Activated CD4-positive, alpha-beta T cell treated with anti-CD3 and anti-CD28 coated beads, Interleukin-2, amount 10 ng/mL, durations not matched to agents 24 days and 14 days (primary cell): ENCODE measurements at regions of chr20 and their contacts with region 1.

Region 1: DNA sequence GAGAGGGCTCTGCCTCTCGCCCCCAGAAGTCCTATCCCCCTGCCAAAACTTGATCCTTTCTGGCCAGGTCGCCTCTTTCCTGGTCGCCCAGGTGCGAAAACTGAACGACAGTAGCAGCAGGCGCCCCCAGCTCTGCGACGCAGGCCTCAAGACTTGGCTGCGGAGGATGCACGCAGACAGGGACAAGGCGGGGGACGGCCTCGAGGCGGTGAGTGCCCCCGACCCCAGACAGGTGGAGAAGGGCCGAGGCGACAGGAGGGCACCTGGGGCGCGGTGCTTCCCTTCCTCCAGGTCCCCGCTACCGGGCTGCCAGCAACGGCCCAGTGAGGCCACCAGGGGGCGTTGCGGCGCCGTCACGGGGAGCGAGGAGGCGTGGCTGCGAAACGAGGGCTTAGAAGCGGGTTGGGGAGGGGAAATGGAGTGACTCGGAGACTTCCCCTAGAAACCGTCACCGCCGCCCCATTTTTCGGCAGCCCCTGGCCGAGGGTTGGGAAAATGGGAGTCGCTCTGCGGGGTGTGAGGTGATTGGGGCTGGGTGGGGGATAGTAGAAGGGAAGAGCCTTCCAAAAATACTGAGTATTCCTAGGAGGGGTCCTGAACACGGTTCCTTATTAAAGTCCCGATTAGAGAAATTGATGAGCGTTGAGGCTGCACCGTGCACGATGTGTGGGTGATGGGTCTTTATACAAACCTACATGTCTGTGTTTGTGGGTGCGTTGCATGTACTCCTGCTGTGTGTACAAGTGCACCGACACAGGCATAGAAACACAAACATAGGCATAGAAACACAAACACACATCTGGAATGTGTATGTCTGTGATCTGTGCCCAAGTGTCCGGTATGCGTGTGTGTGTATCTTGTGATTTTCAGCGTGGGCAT is 44.6 kb downstream of the ARHGAP40 start:
- DNase-seq: peak; percentile 98
- H3K4me3 Mint-ChIP-seq: peak overlapping the region; percentile 86
- H3K27ac Mint-ChIP-seq: no peak overlapping the region
- H3K4me1 Mint-ChIP-seq: peaks cover 7% of the 10 kb centered on the region
- H3K27me3 Mint-ChIP-seq: peaks cover 58% of the 10 kb centered on the region

Region 2: DNA sequence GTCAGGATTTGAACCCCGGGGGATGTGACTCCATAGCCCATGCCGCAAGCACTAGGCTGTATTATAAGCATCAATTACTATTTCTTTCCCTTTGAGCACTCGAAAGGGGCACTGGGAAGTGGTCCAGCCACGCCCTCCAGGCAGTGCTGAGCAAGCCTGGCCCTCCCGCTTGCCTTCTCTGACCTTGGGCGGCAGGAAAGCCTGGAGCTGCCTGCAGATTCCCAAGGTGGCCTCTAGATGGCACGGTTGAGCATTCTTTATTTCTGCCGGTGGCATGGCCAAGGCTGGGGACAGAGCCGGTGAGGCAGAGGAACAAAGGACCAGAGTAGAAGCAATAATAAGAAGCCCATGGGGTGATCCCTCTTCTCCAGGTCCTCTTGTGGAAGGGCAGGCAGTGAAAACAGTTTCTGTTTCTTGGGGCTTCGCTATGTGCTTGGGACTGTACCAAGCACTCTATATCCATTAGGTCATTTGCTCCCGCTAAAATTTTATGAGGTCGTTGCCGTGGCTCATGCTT is 12.6 kb before region 1 on chr20:
- intact Hi-C with region 1: no loop called
- DNase-seq: peak; percentile 88
- H3K4me3 Mint-ChIP-seq: no peak overlapping the region
- H3K27ac Mint-ChIP-seq: no peak overlapping the region
- H3K4me1 Mint-ChIP-seq: peaks cover 8% of the 10 kb centered on the region
- H3K27me3 Mint-ChIP-seq: peaks cover 11% of the 10 kb centered on the region

Region 3: DNA sequence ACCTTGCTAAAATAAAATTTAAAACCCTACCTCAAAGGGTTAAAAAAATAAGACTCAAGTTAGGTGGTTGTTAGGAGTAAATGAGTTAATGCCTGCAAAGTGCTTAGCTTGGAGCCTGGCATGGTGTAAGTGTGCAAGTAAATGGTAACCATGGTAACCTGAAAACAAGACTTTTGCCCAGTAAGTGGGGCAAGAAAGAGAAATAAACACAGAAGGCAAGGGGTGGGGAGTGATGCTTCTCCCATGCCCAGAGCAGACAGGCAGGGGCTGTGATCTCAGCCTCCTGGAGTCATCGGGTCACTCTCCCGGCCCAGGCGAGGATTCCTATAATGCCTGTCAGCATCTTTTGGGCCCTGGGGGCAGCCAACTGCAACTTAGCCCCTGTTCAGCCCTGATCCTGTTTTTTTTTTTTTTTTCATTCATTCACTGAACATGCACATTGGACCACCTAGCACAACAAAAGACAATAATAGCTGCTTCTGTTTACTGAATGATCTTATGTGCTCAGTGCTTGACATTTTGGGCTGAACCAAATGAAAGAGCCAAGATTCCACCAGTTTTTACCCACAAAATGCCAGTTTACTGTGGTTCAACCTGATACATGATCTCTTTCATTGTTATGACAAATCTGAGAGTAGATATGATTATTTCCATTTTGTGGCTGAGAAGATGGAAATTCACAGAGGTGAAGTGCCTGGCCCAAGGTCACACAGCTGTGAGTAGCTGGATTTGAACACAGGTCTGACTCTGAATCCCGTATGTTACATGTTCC is 19.1 kb after region 1 on chr20:
- intact Hi-C with region 1: no loop called
- DNase-seq: no peak
- H3K4me3 Mint-ChIP-seq: no peak overlapping the region
- H3K27ac Mint-ChIP-seq: no peak overlapping the region
- H3K4me1 Mint-ChIP-seq: no peaks in the 10 kb centered on the region
- H3K27me3 Mint-ChIP-seq: peaks cover 26% of the 10 kb centered on the region

Region 4: GRCh38 chr20:38730989-38731737 is 84.9 kb after region 1 on chr20:
- intact Hi-C with region 1: loop called (anchors 1 kb)
- DNase-seq: peak; percentile 93
- H3K4me3 Mint-ChIP-seq: peak overlapping the region; percentile 70
- H3K27ac Mint-ChIP-seq: peak overlapping the region; percentile 73
- H3K4me1 Mint-ChIP-seq: peaks cover 35% of the 10 kb centered on the region
- H3K27me3 Mint-ChIP-seq: peaks cover 88% of the 10 kb centered on the region

Region 5: GRCh38 chr20:38748097-38748860 is 102.1 kb after region 1 on chr20 and contains the start of gene ACTR5:
- intact Hi-C with region 1: loop called (anchors 1 kb)
- DNase-seq: peak; percentile 99
- H3K4me3 Mint-ChIP-seq: peak within 1 kb of the TSS; percentile 91
- H3K27ac Mint-ChIP-seq: peak within 1 kb of the TSS; percentile 93
- H3K4me1 Mint-ChIP-seq: peaks cover 21% of the 10 kb centered on the region
- H3K27me3 Mint-ChIP-seq: peaks cover 9% of the 10 kb centered on the region
- total RNA-seq, gene ACTR5: 15.2 and 15.8 TPM in 2 replicates

Region 6: DNA sequence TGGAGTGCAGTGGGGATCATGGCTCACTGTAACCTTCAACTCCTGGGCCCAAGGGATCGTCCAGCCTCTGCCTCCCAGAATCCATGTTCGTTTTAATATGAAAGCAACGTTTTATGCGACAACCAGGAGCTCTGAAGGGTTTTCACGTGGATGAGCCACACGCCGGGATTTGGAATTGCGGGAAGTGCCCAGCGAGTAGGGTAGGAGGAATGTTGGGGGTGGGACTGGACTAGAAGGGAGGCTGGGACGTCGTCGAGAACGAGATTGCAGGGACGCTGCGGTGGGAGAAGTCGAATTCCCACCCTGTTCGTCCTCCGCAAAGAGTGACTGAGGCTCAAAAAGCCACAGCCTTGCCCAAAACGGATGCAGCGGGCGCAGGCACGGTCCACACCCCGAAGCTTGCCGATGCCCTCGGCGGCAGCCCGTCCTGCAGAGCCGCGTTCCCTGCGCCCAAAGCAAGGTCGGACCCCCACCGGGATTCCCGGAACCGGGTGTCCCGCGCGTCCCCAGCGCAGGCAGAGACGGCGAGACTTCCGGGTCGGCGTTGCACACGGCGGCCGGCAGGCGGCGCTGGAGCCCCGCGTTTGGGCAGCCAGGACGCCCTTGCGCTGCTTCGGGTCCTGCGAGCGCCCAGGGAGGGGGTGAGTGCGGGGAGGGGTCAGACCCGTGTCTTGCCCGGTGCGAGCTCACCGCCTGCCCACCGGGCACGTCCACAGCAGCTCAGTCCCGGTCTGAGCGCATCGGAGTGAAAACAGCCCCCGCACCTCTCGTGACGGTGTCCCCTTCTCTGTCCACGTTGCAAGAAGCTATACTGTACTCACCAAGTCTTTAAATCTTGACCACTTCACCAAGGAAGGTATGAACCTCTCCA is 403.7 kb after region 1 on chr20:
- intact Hi-C with region 1: loop called (anchors 1 kb)
- DNase-seq: peak; percentile 96
- H3K4me3 Mint-ChIP-seq: peak overlapping the region; percentile 88
- H3K27ac Mint-ChIP-seq: peak overlapping the region; percentile 75
- H3K4me1 Mint-ChIP-seq: peaks cover 4% of the 10 kb centered on the region
- H3K27me3 Mint-ChIP-seq: peaks cover 11% of the 10 kb centered on the region

Region 7: GRCh38 chr20:39081255-39081654 is 435.0 kb after region 1 on chr20:
- intact Hi-C with region 1: loop called (anchors 10 kb)
- DNase-seq: peak; percentile 95
- H3K4me3 Mint-ChIP-seq: no peak overlapping the region
- H3K27ac Mint-ChIP-seq: no peak overlapping the region
- H3K4me1 Mint-ChIP-seq: peaks cover 3% of the 10 kb centered on the region
- H3K27me3 Mint-ChIP-seq: peaks cover 25% of the 10 kb centered on the region